ENCODE measurements at regions of chr13 and their contacts with region 1.

Region 1: DNA sequence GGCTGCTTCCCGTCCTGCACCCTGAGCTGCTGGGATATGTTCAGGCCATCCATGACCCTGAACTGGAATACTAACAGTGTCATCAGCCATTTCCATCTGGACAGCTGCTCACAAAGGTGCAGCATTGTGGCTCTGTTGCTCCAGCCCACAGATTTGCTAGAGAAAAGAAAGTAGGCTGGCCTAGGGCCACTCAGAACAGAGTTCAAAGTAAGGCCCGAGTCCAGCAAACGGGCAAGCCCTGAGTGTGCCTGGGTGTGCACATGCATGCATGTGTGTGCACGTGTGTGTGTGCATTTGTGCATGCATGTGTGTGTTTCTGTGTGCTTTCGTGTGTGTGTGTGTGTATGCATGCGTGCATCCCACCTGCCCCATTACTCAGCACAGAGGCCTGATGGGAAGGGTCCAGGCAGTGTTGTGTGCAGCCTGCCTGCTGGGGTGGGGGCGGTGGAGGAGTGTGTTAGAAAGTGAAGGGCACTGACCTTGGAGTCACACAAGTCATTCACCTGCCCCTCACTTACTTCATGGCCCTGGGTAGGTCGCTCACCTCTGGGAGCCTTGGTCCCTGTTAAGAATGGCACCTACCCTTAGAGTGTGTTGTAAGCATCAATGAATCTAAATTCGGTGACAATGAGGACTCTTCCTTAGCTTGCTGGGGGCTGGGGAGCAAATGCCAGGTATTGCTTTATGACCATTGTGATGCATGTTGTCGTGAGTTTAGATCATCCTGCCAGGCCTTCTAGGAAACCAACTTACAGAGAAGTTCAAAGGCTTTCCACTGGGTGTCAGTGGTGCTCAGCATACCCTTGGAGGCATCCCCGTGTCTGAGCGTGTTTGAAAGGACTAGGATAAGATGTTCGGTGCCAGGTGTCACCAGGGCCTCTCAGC is 53.2 kb downstream of the GPR12 start:
- DNase-seq: peak in 2 of 5 donors; percentile 33 to 42
- ATAC-seq: peak; percentile 75 to 85 (median 82)
- H3K4me3 ChIP-seq: no peak overlapping the region
- H3K27ac ChIP-seq: no peak overlapping the region
- H3K4me1 ChIP-seq: no peaks in the 10 kb centered on the region
- H3K27me3 ChIP-seq: peaks cover 0 to 16% (median 0%) of the 10 kb centered on the region in 9 donors
- CTCF ChIP-seq: peak; percentile 40 to 73 (median 64)
- POLR2A ChIP-seq: no peak

Region 2: GRCh38 chr13:26872525-26873385 is 165.4 kb after region 1 on chr13:
- intact Hi-C with region 1: loop called (anchors 1 to 2 kb)
- DNase-seq: peak; percentile 27 to 77 (median 48)
- ATAC-seq: peak in 3 of 4 donors; percentile 43 to 72 (median 63)
- H3K4me3 ChIP-seq: no peak overlapping the region
- H3K27ac ChIP-seq: no peak overlapping the region
- H3K4me1 ChIP-seq: no peaks in the 10 kb centered on the region
- H3K27me3 ChIP-seq: peaks cover 0 to 26% (median 4%) of the 10 kb centered on the region in 9 donors
- CTCF ChIP-seq: peak; percentile 54 to 80 (median 62)
- POLR2A ChIP-seq: no peak